Caco-2 (cell line): ENCODE measurements at regions of chr12 and their contacts with region 1.

Region 1: DNA sequence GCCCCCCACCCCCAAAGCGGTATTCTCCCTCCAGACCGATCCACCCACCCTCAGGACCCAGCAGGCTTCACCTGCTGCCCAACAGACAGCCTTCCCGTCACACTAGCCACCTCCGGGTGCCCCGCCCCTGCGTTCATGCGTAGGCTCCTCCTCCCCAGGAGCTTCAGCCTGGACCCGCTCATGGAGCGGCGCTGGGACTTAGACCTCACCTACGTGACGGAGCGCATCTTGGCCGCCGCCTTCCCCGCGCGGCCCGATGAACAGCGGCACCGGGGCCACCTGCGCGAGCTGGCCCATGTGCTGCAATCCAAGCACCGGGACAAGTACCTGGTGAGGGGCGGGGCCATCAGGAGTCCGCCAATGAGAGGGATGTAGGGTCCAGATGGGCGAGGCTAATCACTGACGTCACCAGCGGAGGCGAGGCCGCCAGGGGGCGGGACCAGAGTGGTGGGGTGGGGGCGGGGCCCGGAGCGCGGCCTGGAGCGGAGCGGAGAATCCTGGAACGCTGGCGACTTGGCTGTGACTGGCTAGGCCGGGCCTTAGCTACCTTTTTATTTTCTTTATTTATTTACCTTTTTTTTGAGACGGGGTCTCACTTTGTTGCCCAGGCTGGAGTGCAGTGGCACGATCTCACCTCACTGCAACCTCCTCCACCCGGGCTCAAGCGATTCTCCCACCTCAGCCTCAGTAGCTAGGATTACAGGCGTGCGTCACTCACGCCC is 4.4 kb downstream of the TNS2 start:
- DNase-seq: peak; percentile 96 to 98
- H3K4me3 ChIP-seq: peak overlapping the region; percentile 78
- H3K4me3 Mint-ChIP-seq: peak overlapping the region; percentile 98
- H3K27ac Mint-ChIP-seq: peak overlapping the region; percentile 97
- H3K4me1 ChIP-seq: peaks cover 40% of the 10 kb centered on the region
- H3K4me1 Mint-ChIP-seq: peaks cover 14% of the 10 kb centered on the region
- H3K27me3 ChIP-seq: no peaks in the 10 kb centered on the region
- H3K27me3 Mint-ChIP-seq: no peaks in the 10 kb centered on the region
- CTCF ChIP-seq: no peak

Region 2: GRCh38 chr12:53005986-53006809 is 48.1 kb before region 1 on chr12 and contains the start of gene EIF4B:
- CTCF ChIA-PET with region 1: interaction called, 20 read pairs
- POLR2A ChIA-PET with region 1: interaction called, 12 read pairs
- intact Hi-C with region 1: no loop called
- DNase-seq: peak; percentile 99 to 100
- H3K4me3 ChIP-seq: peak within 1 kb of the TSS; percentile 98
- H3K4me3 Mint-ChIP-seq: peak within 1 kb of the TSS; percentile 97
- H3K27ac Mint-ChIP-seq: peak within 1 kb of the TSS; percentile 99
- H3K4me1 ChIP-seq: peaks cover 44% of the 10 kb centered on the region
- H3K4me1 Mint-ChIP-seq: peaks cover 24% of the 10 kb centered on the region
- H3K27me3 ChIP-seq: no peaks in the 10 kb centered on the region
- H3K27me3 Mint-ChIP-seq: no peaks in the 10 kb centered on the region
- CTCF ChIP-seq: no peak
- total RNA-seq, gene EIF4B: 445 and 452 TPM in 2 replicates

Region 3: GRCh38 chr12:53079226-53080117 is 25.2 kb after region 1 on chr12 and contains the start of gene SPRYD3:
- CTCF ChIA-PET with region 1: interaction called, 13 read pairs
- POLR2A ChIA-PET with region 1: interaction called, 9 read pairs
- intact Hi-C with region 1: no loop called
- DNase-seq: peak; percentile 97 to 98
- H3K4me3 ChIP-seq: peak within 1 kb of the TSS; percentile 71
- H3K4me3 Mint-ChIP-seq: peak within 1 kb of the TSS; percentile 89
- H3K27ac Mint-ChIP-seq: peak within 1 kb of the TSS; percentile 94
- H3K4me1 ChIP-seq: peaks cover 4% of the 10 kb centered on the region; the same call in 1 of the 2 replicates
- H3K4me1 Mint-ChIP-seq: peaks cover 11% of the 10 kb centered on the region
- H3K27me3 ChIP-seq: no peaks in the 10 kb centered on the region
- H3K27me3 Mint-ChIP-seq: no peaks in the 10 kb centered on the region
- CTCF ChIP-seq: no peak
- total RNA-seq, gene SPRYD3: 8.2 and 8.8 TPM in 2 replicates

Region 4: GRCh38 chr12:53098982-53099651 is 44.8 kb after region 1 on chr12:
- CTCF ChIA-PET with region 1: interaction called, 10 read pairs
- POLR2A ChIA-PET with region 1: interaction called, 3 read pairs
- intact Hi-C with region 1: no loop called
- DNase-seq: peak; percentile 90
- H3K4me3 ChIP-seq: no peak overlapping the region
- H3K4me3 Mint-ChIP-seq: peak overlapping the region; percentile 68
- H3K27ac Mint-ChIP-seq: peak overlapping the region; percentile 49
- H3K4me1 ChIP-seq: peaks cover 36% of the 10 kb centered on the region
- H3K4me1 Mint-ChIP-seq: peaks cover 42% of the 10 kb centered on the region
- H3K27me3 ChIP-seq: no peaks in the 10 kb centered on the region
- H3K27me3 Mint-ChIP-seq: no peaks in the 10 kb centered on the region
- CTCF ChIP-seq: peak; percentile 92 to 93

Region 5: GRCh38 chr12:53198486-53199110 is 144.3 kb after region 1 on chr12:
- CTCF ChIA-PET with region 1: interaction called, 10 read pairs
- POLR2A ChIA-PET with region 1: no interaction called
- intact Hi-C with region 1: no loop called
- DNase-seq: no peak
- H3K4me3 ChIP-seq: no peak overlapping the region
- H3K4me3 Mint-ChIP-seq: no peak overlapping the region
- H3K27ac Mint-ChIP-seq: no peak overlapping the region
- H3K4me1 ChIP-seq: no peaks in the 10 kb centered on the region
- H3K4me1 Mint-ChIP-seq: no peaks in the 10 kb centered on the region
- H3K27me3 ChIP-seq: no peaks in the 10 kb centered on the region
- H3K27me3 Mint-ChIP-seq: no peaks in the 10 kb centered on the region
- CTCF ChIP-seq: no peak